Heart right ventricle (tissue), 16 donors: ENCODE measurements at regions of chr22 and their contacts with region 1.

Region 1: GRCh38 chr22:39543095-39543494 is 10.5 kb upstream of the RPS19BP1 start:
- DNase-seq: no peak
- ATAC-seq: no peak
- H3K4me3 ChIP-seq: no peak overlapping the region
- H3K27ac ChIP-seq: no peak overlapping the region
- H3K4me1 ChIP-seq: no peaks in the 10 kb centered on the region
- H3K27me3 ChIP-seq: peaks cover 0 to 53% (median 35%) of the 10 kb centered on the region in 7 donors
- CTCF ChIP-seq: peak in 4 of 9 donors; percentile 12 to 36 (median 26)

Region 2: DNA sequence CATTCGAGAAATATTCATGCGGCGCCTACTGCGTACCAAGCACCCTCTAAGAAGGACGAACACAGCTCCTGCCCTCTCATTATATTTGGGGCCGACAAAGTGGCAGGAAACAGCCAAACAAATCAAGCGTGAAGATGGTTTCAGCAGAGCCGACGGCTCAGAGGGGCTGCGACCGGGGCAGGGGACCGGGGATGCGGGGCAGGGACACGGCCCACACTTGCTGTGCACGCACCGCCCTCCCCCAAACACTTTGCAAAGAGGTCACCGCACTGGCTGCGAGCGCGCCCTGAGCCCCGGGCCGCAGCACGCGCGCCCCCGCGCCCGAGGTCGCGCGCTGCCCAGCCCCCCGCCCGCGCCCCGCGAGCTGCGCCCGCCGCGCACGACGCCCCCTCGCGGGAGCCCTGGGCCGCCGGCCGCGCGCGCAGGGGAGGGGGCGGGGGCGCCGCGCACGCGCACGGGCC is 193.6 kb before region 1 on chr22:
- intact Hi-C with region 1: no loop called
- DNase-seq: peak; percentile 30 to 53
- ATAC-seq: peak; percentile 54 to 79 (median 73)
- H3K4me3 ChIP-seq: peak overlapping the region; percentile 60 to 96 (median 72)
- H3K27ac ChIP-seq: peak overlapping the region in 8 of 10 donors; percentile 56 to 88 (median 74)
- H3K4me1 ChIP-seq: peaks cover 0 to 32% (median 19%) of the 10 kb centered on the region in 9 donors
- H3K27me3 ChIP-seq: peaks cover 0 to 14% (median 0%) of the 10 kb centered on the region in 7 donors
- CTCF ChIP-seq: no peak

Region 3: GRCh38 chr22:39405346-39406085 is 137.6 kb before region 1 on chr22:
- intact Hi-C with region 1: no loop called
- DNase-seq: no peak
- ATAC-seq: peak in 6 of 8 donors; percentile 47 to 66 (median 59)
- H3K4me3 ChIP-seq: peak overlapping the region in 4 of 10 donors; percentile 5 to 33 (median 20)
- H3K27ac ChIP-seq: peak overlapping the region in 4 of 10 donors; percentile 32 to 41 (median 37)
- H3K4me1 ChIP-seq: peaks cover 0 to 48% (median 20%) of the 10 kb centered on the region in 9 donors
- H3K27me3 ChIP-seq: no peaks in the 10 kb centered on the region
- CTCF ChIP-seq: peak in 1 of 9 donors; percentile 11

Region 4: DNA sequence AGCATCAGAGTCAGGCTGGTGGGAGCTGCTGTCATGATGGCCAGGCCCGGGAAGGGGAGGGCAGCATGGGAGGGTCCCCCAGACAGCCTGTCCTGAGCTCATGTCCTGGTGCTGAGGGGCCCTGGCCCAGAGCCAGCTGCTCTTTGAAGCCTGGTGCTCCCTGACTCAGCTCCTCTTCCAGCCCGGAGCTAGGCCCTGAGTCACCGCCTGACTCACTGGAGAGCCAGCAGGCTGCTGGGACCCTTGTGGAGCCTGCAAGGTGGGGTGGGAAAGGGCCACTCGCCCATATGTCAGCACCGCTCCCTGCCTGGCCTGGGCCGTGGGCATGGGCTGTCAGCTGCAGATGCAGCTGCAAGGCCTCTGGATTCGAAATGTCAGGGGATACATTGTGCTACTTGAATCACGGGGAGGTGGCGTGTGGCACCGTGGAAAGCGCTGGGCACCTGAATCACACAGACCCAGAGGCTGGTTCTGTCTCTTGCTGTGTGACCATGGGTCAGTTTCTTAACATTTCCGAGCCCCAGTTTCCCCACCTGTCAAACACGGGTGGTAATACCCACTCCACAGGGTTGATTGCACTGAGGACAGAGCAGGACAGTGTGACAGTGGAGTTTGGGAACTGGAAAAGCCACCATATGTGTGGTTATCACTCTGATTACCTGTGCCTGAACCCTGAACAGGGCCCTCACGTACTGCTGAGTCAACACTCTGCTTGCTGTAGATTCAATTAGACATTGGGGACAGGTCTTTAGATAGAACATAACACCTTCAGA is 31.9 kb after region 1 on chr22:
- intact Hi-C with region 1: no loop called
- DNase-seq: no peak
- ATAC-seq: peak in 1 of 8 donors; percentile 19
- H3K4me3 ChIP-seq: no peak overlapping the region
- H3K27ac ChIP-seq: no peak overlapping the region
- H3K4me1 ChIP-seq: no peaks in the 10 kb centered on the region
- H3K27me3 ChIP-seq: peaks cover 0 to 43% (median 28%) of the 10 kb centered on the region in 7 donors
- CTCF ChIP-seq: no peak

Region 5: GRCh38 chr22:39661842-39662676 is 119.0 kb after region 1 on chr22:
- intact Hi-C with region 1: no loop called
- DNase-seq: no peak
- ATAC-seq: no peak
- H3K4me3 ChIP-seq: peak overlapping the region in 1 of 10 donors; percentile 39
- H3K27ac ChIP-seq: no peak overlapping the region
- H3K4me1 ChIP-seq: peaks cover 0 to 22% (median 10%) of the 10 kb centered on the region in 9 donors
- H3K27me3 ChIP-seq: peaks cover 28 to 100% (median 97%) of the 10 kb centered on the region in 7 donors
- CTCF ChIP-seq: no peak

Region 6: GRCh38 chr22:40036591-40037225 is 493.6 kb after region 1 on chr22:
- intact Hi-C with region 1: loop called in 2 of 10 experiments (anchors 5 kb)
- DNase-seq: peak; percentile 43 to 51
- ATAC-seq: peak; percentile 57 to 78 (median 73)
- H3K4me3 ChIP-seq: no peak overlapping the region
- H3K27ac ChIP-seq: no peak overlapping the region
- H3K4me1 ChIP-seq: peaks cover 0 to 23% (median 18%) of the 10 kb centered on the region in 9 donors
- H3K27me3 ChIP-seq: peaks cover 0 to 39% (median 0%) of the 10 kb centered on the region in 7 donors
- CTCF ChIP-seq: peak; percentile 38 to 77 (median 68)